Activated CD4-positive, alpha-beta T cell treated with anti-CD3 and anti-CD28 coated beads, Interleukin-2, amount 10 ng/mL, durations not matched to agents 24 days and 14 days (primary cell): ENCODE measurements at regions of chr18 and their contacts with region 1.

Region 1: GRCh38 chr18:77650799-77651385 is 401.2 kb downstream of the GALR1 start:
- DNase-seq: peak; percentile 91
- H3K4me3 Mint-ChIP-seq: no peak overlapping the region
- H3K27ac Mint-ChIP-seq: no peak overlapping the region
- H3K4me1 Mint-ChIP-seq: peaks cover 2% of the 10 kb centered on the region
- H3K27me3 Mint-ChIP-seq: peaks cover 4% of the 10 kb centered on the region

Region 2: GRCh38 chr18:76875390-76876325 is 775.2 kb before region 1 on chr18:
- intact Hi-C with region 1: loop called (anchors 5 kb)
- DNase-seq: peak; percentile 84
- H3K4me3 Mint-ChIP-seq: no peak overlapping the region
- H3K27ac Mint-ChIP-seq: peak overlapping the region; percentile 22
- H3K4me1 Mint-ChIP-seq: peaks cover 13% of the 10 kb centered on the region
- H3K27me3 Mint-ChIP-seq: no peaks in the 10 kb centered on the region

Region 3: DNA sequence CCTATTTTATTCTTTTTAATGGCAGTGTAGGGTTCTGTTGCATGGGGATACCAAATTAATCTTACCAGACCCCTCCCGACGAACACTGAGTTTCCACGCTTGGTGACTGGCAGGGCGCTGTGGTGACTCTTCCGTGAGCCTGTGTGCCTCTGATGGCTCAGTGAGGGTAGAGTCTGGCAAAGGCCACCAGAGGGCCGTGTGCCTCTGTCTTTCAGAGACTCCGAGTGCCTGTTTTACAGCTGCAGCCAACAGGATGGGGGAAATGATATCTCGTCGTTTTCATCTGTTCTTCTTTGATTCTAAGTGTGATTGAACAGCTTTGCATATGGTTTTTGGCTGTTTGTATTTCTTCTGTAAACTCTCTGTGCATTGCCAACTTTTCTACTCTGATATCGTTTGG is 728.8 kb before region 1 on chr18:
- intact Hi-C with region 1: loop called (anchors 2 kb)
- DNase-seq: peak; percentile 88
- H3K4me3 Mint-ChIP-seq: no peak overlapping the region
- H3K27ac Mint-ChIP-seq: peak overlapping the region; percentile 18
- H3K4me1 Mint-ChIP-seq: peaks cover 14% of the 10 kb centered on the region
- H3K27me3 Mint-ChIP-seq: no peaks in the 10 kb centered on the region

Region 4: GRCh38 chr18:77000527-77000926 is 650.4 kb before region 1 on chr18:
- intact Hi-C with region 1: loop called (anchors 1 kb)
- DNase-seq: peak; percentile 83
- H3K4me3 Mint-ChIP-seq: no peak overlapping the region
- H3K27ac Mint-ChIP-seq: no peak overlapping the region
- H3K4me1 Mint-ChIP-seq: peaks cover 31% of the 10 kb centered on the region
- H3K27me3 Mint-ChIP-seq: peaks cover 4% of the 10 kb centered on the region

Region 5: DNA sequence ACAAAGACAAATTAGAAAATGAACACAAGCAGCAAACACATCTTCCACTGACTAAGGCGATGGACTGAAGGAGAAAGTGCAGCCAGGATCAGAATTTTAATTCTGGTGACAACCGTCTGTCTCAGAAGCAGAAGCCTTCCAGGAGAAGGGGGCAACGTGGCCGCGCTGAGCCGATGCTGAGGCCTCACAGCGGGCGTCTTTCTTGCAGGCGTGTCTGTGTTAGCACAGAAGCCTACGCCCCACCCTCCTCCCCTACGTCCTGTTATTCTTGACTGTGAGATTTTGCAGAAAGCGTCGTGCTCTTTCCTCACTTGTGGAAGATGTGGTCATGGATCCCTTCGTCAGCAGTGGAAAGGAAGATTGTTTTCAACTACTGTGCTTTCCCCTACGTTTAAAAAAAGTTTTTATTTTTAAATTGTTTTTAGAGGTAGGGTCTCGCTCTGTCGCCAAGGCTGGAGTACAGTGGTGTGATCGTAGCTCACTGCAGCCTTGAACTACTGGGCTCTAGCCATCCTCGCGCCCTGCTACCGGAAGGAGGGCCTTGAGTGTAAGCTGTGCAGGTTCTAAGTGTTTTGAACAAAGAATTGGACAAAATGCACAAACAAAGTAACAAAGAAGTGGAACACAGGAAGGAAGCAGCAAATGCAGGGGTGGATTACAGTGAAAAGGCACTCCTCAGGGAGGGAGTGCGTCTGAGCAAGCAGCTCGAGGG is 20.7 kb after region 1 on chr18:
- intact Hi-C with region 1: no loop called
- DNase-seq: peak; percentile 40
- H3K4me3 Mint-ChIP-seq: no peak overlapping the region
- H3K27ac Mint-ChIP-seq: no peak overlapping the region
- H3K4me1 Mint-ChIP-seq: no peaks in the 10 kb centered on the region
- H3K27me3 Mint-ChIP-seq: no peaks in the 10 kb centered on the region

Region 6: GRCh38 chr18:77711096-77711495 is 60.2 kb after region 1 on chr18:
- intact Hi-C with region 1: no loop called
- DNase-seq: no peak
- H3K4me3 Mint-ChIP-seq: no peak overlapping the region
- H3K27ac Mint-ChIP-seq: no peak overlapping the region
- H3K4me1 Mint-ChIP-seq: no peaks in the 10 kb centered on the region
- H3K27me3 Mint-ChIP-seq: no peaks in the 10 kb centered on the region